ENCODE measurements at regions of chr2 and their contacts with region 1.

Region 1: DNA sequence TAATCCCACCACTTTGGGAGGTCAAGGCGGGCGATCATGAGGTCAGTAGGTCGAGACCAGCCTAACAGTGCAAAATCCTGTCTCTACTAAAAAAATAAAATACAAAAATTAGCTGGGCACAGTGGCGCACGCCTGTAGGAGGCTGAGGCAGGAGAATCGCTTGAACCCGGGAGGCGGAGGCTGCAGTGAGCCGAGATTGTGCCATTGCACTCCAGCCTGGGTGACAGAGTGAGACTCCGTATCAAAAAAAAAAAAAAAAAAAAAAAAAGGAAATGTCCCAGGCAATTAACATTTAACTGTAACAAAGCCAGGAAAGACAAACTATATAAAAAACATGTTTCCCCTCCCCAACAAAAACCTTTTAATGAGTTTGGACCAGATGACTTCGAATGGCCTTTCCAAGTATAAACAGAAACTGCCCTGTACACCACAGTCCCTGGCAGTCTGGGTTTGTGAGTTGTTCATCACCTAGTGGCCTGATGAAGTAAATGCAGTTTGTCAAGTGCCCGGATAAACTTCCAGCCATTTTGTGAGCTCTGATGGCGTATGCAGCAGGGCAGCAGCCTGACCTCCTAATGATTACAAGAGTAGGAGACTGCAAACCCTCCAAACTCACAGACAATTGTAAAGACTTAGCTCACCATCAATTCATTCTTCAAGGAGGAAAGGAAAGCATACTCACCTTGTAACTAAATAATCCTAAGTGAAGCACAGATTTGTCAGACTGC is 16.6 kb upstream of the PCBP1 start:
- DNase-seq: no peak
- H3K4me3 ChIP-seq: no peak overlapping the region
- H3K27ac ChIP-seq: no peak overlapping the region
- H3K4me1 ChIP-seq: no peaks in the 10 kb centered on the region
- H3K27me3 ChIP-seq: no peaks in the 10 kb centered on the region
- CTCF ChIP-seq: peak; percentile 43 to 88 (median 77)
- EP300 ChIP-seq: no peak
- POLR2A ChIP-seq: 0 out of 3 replicates have a peak, but pooled peaks of 1 of the 2 experiments have one; percentile 27
- RAD21 ChIP-seq: peak; percentile 77 to 87

Region 2: DNA sequence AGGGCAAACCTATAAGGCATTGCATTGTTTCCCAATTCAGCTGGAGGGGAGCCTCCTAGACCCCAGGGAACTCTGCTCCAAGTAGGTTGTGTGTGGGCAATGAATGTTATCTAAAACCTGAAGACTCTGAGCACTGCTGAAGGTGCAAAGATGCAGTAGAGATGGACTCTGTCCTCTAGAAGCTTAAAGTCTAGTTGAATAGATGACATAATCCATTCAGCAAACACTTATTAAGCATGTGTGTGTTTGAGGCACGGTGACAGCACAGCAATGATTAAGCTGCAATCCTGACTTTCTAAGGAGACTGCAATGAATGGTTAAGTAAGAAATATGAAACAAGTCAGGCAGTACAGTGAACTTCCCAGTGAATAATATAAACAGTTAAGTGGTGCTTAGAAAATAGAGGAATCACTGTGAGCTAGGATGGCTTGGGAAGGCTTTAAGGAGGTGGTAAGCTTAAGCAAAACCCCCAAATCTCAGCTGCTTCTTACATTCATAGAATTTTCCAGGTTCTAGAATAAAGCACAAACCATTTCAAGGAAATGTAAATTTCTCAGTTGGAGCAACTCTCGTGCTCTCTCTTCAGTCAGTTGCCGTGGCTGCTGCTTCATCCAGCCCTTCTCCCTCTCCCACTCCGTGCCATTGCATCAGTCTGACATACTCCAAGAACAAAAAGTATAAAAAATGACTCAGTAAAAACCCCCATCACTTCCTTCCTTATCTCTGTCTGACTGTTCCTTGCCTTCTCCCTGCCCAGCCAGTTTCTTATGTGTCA is 136.7 kb before region 1 on chr2:
- CTCF ChIA-PET with region 1: interaction called, 11 read pairs
- POLR2A ChIA-PET with region 1: interaction called, 4 read pairs
- DNase-seq: no peak
- H3K4me3 ChIP-seq: no peak overlapping the region
- H3K27ac ChIP-seq: no peak overlapping the region
- H3K4me1 ChIP-seq: peaks cover 0 to 6% (median 3%) of the 10 kb centered on the region in 4 experiments; a peak in 3 of 7 replicates
- H3K27me3 ChIP-seq: no peaks in the 10 kb centered on the region
- CTCF ChIP-seq: no peak
- EP300 ChIP-seq: no peak
- POLR2A ChIP-seq: no peak
- RAD21 ChIP-seq: no peak

Region 3: GRCh38 chr2:70043252-70043875 is 27.3 kb before region 1 on chr2:
- CTCF ChIA-PET with region 1: interaction called, 14 read pairs
- POLR2A ChIA-PET with region 1: interaction called, 3 read pairs
- DNase-seq: no peak
- H3K4me3 ChIP-seq: no peak overlapping the region
- H3K27ac ChIP-seq: no peak overlapping the region
- H3K4me1 ChIP-seq: no peaks in the 10 kb centered on the region
- H3K27me3 ChIP-seq: no peaks in the 10 kb centered on the region
- CTCF ChIP-seq: no peak
- EP300 ChIP-seq: no peak
- POLR2A ChIP-seq: no peak
- RAD21 ChIP-seq: no peak

Region 4: DNA sequence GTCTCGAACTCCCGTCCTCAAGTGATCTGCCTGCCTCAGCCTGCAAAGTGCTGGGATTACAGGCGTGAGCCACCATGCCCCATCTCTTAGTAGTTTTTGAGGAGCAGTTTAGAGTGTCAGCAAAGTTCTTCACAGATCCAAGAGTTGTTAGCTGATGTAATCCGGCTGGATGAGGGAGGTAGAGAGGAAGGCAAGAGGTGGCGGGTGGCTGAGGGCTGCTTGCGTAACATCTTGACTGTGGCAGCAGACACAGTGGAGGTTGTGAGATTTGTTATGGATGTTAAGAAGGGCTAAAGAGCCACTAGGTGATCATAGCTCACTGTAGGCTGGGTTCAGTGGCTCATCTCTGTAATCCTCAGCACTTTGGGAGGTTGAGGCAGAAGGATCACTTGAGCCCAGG is 250.7 kb after region 1 on chr2:
- CTCF ChIA-PET with region 1: no interaction called
- POLR2A ChIA-PET with region 1: no interaction called
- DNase-seq: no peak
- H3K4me3 ChIP-seq: no peak overlapping the region
- H3K27ac ChIP-seq: no peak overlapping the region
- H3K4me1 ChIP-seq: no peaks in the 10 kb centered on the region
- H3K27me3 ChIP-seq: no peaks in the 10 kb centered on the region
- CTCF ChIP-seq: no peak
- EP300 ChIP-seq: no peak
- POLR2A ChIP-seq: no peak
- RAD21 ChIP-seq: no peak